ENCODE measurements at regions of chr12 and their contacts with region 1.

Region 1: GRCh38 chr12:51270067-51270970 is at the start of gene SMAGP:
- DNase-seq: peak; percentile 33
- H3K4me3 Mint-ChIP-seq: peak within 1 kb of the TSS; percentile 88
- H3K27ac Mint-ChIP-seq: peak within 1 kb of the TSS; percentile 68
- H3K4me1 Mint-ChIP-seq: peaks cover 14% of the 10 kb centered on the region
- H3K27me3 Mint-ChIP-seq: peaks cover 30% of the 10 kb centered on the region
- total RNA-seq, gene SMAGP: 0.16 TPM in 1 of 2 replicates, not detected in the other

Region 2: DNA sequence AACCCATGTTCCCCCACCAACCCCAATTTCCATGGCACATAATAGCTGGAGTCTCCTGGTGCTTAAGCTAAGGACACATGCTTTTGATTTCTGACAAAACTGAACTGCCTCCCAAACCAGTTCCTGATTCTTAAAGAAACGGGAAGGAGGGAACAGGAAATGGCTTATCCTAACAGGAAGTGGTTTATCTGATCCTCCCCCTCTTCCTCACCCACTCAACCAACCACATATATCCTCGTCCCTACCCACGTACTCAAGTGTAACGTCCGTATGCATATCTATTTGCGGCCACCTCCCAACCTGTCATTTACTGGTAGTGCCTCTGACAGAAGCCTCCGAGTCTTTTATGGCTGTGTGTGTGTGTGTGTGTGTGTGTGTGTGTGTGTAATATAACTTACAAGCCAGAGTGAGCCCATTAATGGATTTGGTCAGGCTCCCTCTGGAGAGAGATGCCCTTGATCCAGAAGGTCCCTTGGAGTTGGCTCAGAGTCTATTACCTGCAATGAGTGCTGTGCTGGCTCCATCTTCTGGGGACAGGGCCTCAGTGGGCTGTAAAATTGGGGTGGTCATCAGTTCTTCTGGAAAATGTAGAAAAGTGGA is 24.0 kb before region 1 on chr12:
- intact Hi-C with region 1: loop called (anchors 2 kb)
- DNase-seq: peak; percentile 26
- H3K4me3 Mint-ChIP-seq: peak overlapping the region; percentile 49
- H3K27ac Mint-ChIP-seq: peak overlapping the region; percentile 91
- H3K4me1 Mint-ChIP-seq: peaks cover 63% of the 10 kb centered on the region
- H3K27me3 Mint-ChIP-seq: no peaks in the 10 kb centered on the region